ENCODE measurements at regions of chr12 and their contacts with region 1.

Region 1: GRCh38 chr12:44015335-44015941 is 179.6 kb downstream of the TMEM117 start:
- ATAC-seq: peak in 6 of 8 experiments; percentile 33 to 68 (median 42)
- H3K4me3 ChIP-seq: no peak overlapping the region
- H3K27ac ChIP-seq: no peak overlapping the region
- H3K4me1 ChIP-seq: no peaks in the 10 kb centered on the region

Region 2: DNA sequence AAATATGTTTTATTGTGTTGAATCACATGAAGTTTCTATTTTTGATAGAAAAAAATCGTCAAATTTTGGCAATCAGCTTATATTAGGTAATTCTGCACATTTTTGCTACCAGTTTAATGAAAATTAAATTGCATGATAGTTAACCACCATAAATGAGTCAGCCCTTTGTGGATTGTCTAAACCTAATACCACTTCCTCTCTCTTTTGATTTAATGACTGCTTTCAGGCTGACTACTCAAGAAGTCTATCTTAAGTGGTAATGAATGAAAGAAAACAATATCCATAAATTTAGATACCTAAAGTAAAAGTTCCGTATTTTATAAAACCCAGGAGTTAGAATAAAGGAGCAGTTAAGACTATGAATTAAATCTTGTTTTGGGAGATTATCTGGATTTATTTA is 270.9 kb after region 1 on chr12:
- in situ Hi-C with region 1: loop called in 1 of 9 experiments (anchors 25 kb)
- ATAC-seq: no peak
- H3K4me3 ChIP-seq: no peak overlapping the region
- H3K27ac ChIP-seq: no peak overlapping the region
- H3K4me1 ChIP-seq: peaks cover 0 to 7% of the 10 kb centered on the region in 2 donors

Region 3: DNA sequence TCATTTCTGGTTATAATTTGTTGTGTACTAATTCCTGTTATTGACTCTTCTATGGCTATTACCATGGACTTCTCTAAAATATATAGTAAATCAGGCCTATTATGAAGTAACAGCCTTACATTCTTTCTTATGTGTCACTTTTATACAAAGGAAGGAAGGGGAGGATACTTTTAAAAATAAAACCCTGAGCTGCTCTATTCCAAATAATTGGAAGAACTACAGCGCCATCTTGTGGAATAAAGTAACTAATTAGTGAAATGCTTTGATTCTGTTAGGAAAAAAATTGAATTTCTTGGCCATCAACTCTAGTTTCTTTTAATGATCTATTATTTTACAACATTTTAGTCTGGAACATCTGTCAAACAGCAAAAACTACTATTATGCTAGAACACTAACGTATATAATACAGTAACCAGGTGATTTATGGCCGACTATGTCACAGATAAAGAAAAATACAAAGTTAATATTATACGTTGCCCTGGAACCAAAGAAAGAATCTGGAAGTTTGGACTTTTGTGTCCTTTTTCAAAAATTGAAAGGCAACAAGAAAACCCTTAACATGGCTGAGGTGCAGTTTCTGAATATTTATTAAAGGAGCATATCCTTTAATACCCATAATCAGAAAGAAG is 915.6 kb after region 1 on chr12:
- in situ Hi-C with region 1: loop called in 5 of 9 experiments (anchors 25 kb)
- ATAC-seq: peak in 7 of 8 experiments; percentile 33 to 70 (median 58)
- H3K4me3 ChIP-seq: no peak overlapping the region
- H3K27ac ChIP-seq: no peak overlapping the region
- H3K4me1 ChIP-seq: no peaks in the 10 kb centered on the region

Measured in motor neuron (in vitro differentiated cells).